MCF 10A (cell line): ENCODE measurements at regions of chrX and their contacts with region 1.

Region 1: GRCh38 chrX:136564698-136565097 is 32.7 kb downstream of the VGLL1 start:
- DNase-seq: no peak
- H3K4me3 Mint-ChIP-seq: no peak overlapping the region
- H3K27ac Mint-ChIP-seq: no peak overlapping the region
- H3K4me1 Mint-ChIP-seq: no peaks in the 10 kb centered on the region
- H3K27me3 Mint-ChIP-seq: peaks cover 52% of the 10 kb centered on the region
- CTCF ChIP-seq: no peak

Region 2: DNA sequence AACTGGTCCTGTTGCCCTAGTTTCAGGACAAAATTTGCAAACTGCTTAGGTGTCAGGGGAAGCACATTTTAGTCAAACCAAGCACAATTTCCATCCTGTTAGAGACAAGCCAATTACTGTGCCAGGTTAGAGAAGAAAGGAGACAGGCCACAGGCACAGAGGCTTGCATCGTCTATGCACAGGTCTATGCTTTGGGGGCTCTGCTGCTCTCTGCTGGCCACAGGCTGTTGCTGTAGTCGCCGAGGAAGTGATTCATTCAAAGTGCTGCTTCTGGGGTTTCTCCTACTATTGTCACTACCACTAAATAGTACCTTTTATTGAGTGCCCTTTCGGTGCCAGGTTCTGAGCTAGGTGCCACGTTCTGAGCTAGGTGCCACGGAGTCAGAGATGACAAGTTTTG is 12.9 kb after region 1 on chrX:
- CTCF ChIA-PET with region 1: interaction called, 22 read pairs
- POLR2A ChIA-PET with region 1: interaction called, 4 read pairs
- intact Hi-C with region 1: no loop called
- DNase-seq: peak; percentile 51
- H3K4me3 Mint-ChIP-seq: no peak overlapping the region
- H3K27ac Mint-ChIP-seq: no peak overlapping the region
- H3K4me1 Mint-ChIP-seq: no peaks in the 10 kb centered on the region
- H3K27me3 Mint-ChIP-seq: peaks cover 35% of the 10 kb centered on the region
- CTCF ChIP-seq: peak; percentile 56

Region 3: DNA sequence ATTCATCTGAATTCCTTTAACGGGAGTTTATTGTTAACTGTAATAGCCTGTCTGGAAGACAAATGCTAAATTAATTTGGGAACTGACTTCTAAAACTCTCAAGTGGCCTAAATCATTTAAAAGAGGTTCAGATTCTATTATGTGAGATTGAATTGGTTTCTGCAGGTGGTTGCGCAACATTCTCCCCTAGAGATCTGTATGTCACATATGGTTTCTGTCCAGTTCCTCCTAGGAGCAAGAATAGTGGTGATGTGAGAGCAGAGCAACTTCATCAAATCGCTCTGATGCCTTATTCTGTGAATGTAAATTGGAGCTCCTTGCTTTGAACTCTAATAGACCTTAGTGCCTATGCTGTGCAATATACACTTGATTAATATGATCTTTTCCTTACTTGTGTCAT is 613.7 kb after region 1 on chrX:
- CTCF ChIA-PET with region 1: no interaction called
- POLR2A ChIA-PET with region 1: no interaction called
- intact Hi-C with region 1: no loop called
- DNase-seq: no peak
- H3K4me3 Mint-ChIP-seq: no peak overlapping the region
- H3K27ac Mint-ChIP-seq: no peak overlapping the region
- H3K4me1 Mint-ChIP-seq: peaks cover 9% of the 10 kb centered on the region
- H3K27me3 Mint-ChIP-seq: no peaks in the 10 kb centered on the region
- CTCF ChIP-seq: no peak